Head of caudate nucleus (tissue), 42 donors: ENCODE measurements at regions of chr4 and their contacts with region 1.

Region 1: GRCh38 chr4:117134386-117134785 is 49.0 kb upstream of the TRAM1L1 start:
- DNase-seq: peak in 40 of 42 donors; percentile 14 to 82 (median 50)

Region 2: DNA sequence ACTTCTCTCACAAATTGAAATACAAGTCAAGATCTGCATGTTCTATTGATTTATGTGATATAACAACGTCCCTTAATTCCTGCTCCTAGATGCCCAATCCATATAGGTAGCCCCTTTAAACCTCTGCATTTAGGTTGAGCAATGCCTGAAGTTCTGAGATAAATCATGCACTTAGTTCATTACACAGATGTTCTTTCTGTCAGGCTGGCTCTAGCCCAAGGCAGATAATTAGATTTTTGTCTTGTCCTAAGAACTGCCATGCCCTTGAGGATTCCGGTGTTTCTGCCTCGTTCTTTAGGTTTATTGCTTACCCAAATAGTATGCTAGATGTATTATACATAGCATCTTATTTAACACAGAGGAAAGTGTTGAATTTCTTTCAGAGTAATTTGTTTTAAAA is 192.1 kb before region 1 on chr4:
- intact Hi-C with region 1: no loop called
- DNase-seq: no peak

Region 3: DNA sequence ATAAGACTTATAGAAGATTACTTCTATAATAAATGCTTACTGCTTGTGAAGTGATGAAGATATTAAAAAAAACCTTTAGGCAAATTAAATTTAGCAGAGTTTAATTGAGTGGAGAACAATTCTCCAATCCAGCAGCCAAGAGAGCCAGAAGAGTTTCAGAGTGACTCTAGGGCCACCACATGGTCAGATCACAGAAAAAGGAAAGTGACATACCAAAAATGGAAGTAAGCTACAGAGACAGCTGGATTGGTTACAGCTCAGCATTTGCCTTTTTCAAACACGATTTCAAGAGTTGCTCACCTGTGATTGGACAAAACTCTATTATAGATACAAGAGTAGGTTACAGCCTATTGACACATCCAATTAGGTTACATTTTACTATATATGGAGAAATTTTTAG is 30.0 kb after region 1 on chr4:
- intact Hi-C with region 1: no loop called
- DNase-seq: no peak

Region 4: GRCh38 chr4:117210551-117210950 is 76.2 kb after region 1 on chr4:
- intact Hi-C with region 1: no loop called
- DNase-seq: no peak

Region 5: GRCh38 chr4:117421706-117422105 is 287.3 kb after region 1 on chr4:
- intact Hi-C with region 1: no loop called
- DNase-seq: no peak

Region 6: DNA sequence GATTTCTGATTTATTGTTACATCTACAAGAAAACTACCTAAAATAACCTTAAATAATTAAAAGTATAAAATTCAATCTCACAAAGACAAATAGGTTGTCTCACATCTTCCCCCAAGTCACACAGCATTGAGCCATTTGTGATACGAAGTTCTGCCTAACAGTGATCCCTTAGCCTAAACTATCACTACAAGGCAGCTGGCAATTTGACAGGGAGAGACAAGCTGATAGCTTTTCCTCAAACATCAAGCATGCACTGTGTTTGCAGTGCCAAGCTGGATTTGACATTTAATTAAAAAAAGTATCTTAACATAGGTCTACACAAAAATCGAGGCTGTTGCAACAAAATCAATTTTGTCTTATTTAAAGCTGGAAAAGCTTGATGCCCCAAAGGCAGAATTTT is 415.7 kb after region 1 on chr4:
- intact Hi-C with region 1: loop called (anchors 10 kb)
- DNase-seq: peak in 1 of 42 donors; percentile 2

Region 7: DNA sequence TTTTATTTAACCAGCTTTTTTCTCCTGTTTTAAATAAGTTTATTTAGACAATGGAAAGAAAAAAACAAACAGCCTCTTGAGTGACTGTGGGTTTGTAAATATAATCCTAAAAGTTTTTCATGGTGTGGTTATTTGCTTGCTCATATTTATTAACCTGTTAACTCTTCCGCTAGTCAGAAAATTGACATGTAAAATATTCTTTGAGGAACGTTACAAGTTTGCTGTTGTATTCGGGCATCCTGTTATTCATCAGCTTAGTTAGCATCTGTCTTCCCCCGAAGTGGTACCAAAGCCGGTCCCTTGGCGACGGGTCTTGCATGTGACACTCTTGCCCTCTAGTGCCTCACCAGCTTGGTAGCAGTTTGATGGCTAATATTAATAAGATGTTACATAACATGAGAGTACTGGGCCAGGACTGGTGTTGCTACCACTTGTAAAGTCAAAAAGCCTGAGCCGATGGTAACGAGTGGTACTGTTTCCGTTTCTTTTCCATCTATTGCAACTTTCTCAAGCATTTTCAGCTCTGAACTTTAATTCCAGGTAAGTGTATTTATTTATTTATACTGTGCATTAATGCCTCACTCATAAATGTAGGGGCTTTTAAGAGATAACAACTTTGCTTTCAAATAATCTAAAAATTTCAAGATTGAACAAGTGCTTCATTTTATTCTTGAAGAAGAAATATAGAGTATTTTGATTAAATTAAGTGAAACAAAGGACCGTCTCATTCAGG is 899.8 kb after region 1 on chr4 and contains the start of gene NDST3:
- intact Hi-C with region 1: loop called (anchors 10 kb)
- DNase-seq: peak; percentile 61 to 96 (median 85)